Activated CD4-positive, alpha-beta memory T cell treated with anti-CD3 and anti-CD28 coated beads for 36 hours (primary cell): ENCODE measurements at regions of chr1 and their contacts with region 1.

Region 1: GRCh38 chr1:233790662-233791375 is 113.7 kb upstream of the SLC35F3 start:
- DNase-seq: peak; percentile 34
- H3K4me3 Mint-ChIP-seq: no peak overlapping the region
- H3K27ac Mint-ChIP-seq: no peak overlapping the region
- H3K4me1 Mint-ChIP-seq: no peaks in the 10 kb centered on the region
- H3K27me3 Mint-ChIP-seq: peaks cover 14% of the 10 kb centered on the region

Region 2: DNA sequence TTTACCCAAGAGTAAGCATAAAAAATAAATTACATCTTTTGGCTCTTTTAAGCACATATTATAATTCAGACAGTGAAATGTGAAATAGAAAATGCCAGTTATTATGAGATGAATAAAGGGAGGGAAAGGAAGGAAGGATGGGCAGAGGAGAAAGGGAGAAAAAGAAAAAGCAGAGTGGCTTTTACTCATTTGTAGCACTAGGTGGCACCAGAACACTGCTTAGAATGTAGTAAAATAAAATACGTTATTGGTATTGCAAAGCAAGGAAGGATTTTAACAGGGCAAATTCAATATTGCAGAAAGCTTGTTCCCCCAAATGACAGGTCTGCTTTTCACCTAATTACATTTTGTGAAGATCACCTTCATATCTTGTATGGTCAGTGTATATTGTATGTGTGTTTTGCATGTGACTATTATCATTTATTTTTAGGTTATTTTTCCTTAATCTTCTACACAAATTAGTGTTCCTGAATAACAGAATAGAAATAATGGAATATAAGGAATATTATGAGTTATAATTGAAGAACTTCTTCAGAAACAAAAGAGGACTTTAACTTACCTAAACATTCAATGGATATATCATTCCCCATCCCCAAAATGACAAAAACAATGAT is 486.2 kb before region 1 on chr1:
- CTCF ChIA-PET with region 1: interaction called, 3 read pairs
- POLR2A ChIA-PET with region 1: no interaction called
- intact Hi-C with region 1: loop called (anchors 1 kb)
- DNase-seq: no peak
- H3K4me3 Mint-ChIP-seq: no peak overlapping the region
- H3K27ac Mint-ChIP-seq: no peak overlapping the region
- H3K4me1 Mint-ChIP-seq: no peaks in the 10 kb centered on the region
- H3K27me3 Mint-ChIP-seq: peaks cover 1% of the 10 kb centered on the region

Region 3: DNA sequence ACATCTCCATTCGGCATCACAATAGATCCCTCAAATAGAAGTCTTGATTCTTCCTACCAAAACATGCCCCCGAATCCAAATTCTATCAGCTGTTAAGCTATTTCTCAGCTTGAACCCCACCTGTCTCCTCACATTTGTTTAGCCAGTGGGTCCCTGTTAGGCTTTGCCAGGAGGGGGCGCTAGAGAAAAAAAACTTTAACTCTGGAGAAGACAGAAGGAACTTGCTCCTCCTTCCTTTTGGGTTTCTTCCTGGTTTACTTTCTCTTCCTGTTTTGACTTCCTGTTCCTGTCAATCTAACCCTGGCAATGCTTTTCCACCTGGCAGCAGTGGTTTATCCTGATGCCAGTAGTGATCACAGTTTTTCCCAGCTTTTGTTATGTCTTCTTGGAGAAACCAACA is 272.5 kb before region 1 on chr1:
- CTCF ChIA-PET with region 1: interaction called, 4 read pairs
- POLR2A ChIA-PET with region 1: no interaction called
- intact Hi-C with region 1: loop called (anchors 1 kb)
- DNase-seq: peak; percentile 50
- H3K4me3 Mint-ChIP-seq: no peak overlapping the region
- H3K27ac Mint-ChIP-seq: no peak overlapping the region
- H3K4me1 Mint-ChIP-seq: peaks cover 2% of the 10 kb centered on the region
- H3K27me3 Mint-ChIP-seq: peaks cover 2% of the 10 kb centered on the region